ENCODE measurements at regions of chr13 and their contacts with region 1.

Region 1: DNA sequence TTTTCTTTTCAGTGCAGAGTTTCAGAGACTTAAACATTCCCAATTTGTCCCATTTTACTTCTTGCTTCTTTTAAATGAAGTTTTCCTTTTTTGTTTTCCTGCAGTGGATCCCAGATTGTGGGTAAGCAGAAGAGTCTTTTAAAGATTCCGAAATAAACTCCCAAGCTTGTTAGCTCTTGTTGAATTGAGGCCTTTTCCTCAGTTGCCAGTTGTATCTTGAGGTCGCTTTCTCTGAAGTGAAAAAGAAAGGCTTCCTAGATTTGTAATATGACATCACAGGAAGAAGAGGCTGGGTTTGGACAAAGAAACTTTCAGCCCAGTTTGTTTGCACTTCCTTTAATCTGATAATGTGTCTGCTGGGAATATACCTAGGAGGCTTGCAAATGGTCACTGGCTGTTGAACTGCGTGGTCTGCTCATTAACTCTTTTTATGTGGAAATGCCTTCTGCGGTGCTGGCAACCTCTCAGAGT is at the start of gene LPAR6:
- DNase-seq: no peak
- H3K4me3 ChIP-seq: peak within 1 kb of the TSS; percentile 66
- H3K27ac ChIP-seq: peak within 1 kb of the TSS; percentile 86
- H3K4me1 ChIP-seq: peaks cover 11% of the 10 kb centered on the region
- H3K27me3 ChIP-seq: no peaks in the 10 kb centered on the region
- CTCF ChIP-seq: no peak
- total RNA-seq, gene LPAR6: 11.5 TPM

Region 2: DNA sequence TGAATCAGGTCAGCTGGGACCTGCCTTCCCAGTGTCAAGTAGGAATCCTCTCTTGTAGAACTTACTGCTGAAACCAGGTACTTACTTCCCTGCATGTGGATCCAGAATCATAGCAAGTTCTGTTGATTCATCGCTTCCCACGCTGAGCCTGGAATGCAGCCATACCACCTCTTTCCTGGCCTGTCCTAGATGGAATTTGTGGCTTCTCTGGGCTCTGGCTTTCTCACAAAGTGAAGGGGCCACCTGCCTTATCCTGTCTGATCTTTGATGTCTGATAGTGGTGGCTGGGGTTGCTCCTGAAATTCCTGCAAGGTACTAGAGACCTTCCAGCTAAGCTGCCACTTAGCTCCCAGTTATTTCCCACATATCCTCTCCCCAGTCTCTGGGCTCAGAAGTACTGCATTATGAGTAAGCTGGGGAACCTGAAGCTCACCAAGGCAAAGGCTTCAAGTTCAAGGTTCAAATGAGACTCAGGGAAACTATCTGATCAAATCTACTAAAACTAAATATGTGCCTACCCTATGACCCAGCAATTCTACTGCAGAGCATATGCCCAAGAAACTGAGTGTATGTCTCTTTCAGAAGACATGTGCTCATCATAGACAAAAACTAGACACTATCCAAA is 515.4 kb before region 1 on chr13:
- intact Hi-C with region 1: no loop called
- DNase-seq: no peak
- H3K4me3 ChIP-seq: no peak overlapping the region
- H3K27ac ChIP-seq: no peak overlapping the region
- H3K4me1 ChIP-seq: no peaks in the 10 kb centered on the region
- H3K27me3 ChIP-seq: no peaks in the 10 kb centered on the region
- CTCF ChIP-seq: no peak

Region 3: GRCh38 chr13:48233046-48233907 is 179.6 kb before region 1 on chr13 and contains the start of gene ITM2B:
- intact Hi-C with region 1: no loop called
- DNase-seq: peak; percentile 84
- H3K4me3 ChIP-seq: peak within 1 kb of the TSS; percentile 100
- H3K27ac ChIP-seq: peak within 1 kb of the TSS; percentile 100
- H3K4me1 ChIP-seq: peaks cover 70% of the 10 kb centered on the region
- H3K27me3 ChIP-seq: no peaks in the 10 kb centered on the region
- CTCF ChIP-seq: peak; percentile 62
- total RNA-seq, gene ITM2B: 533 TPM

Region 4: GRCh38 chr13:48344264-48344663 is 68.7 kb before region 1 on chr13:
- intact Hi-C with region 1: no loop called
- DNase-seq: no peak
- H3K4me3 ChIP-seq: no peak overlapping the region
- H3K27ac ChIP-seq: no peak overlapping the region
- H3K4me1 ChIP-seq: no peaks in the 10 kb centered on the region
- H3K27me3 ChIP-seq: no peaks in the 10 kb centered on the region
- CTCF ChIP-seq: no peak

Region 5: DNA sequence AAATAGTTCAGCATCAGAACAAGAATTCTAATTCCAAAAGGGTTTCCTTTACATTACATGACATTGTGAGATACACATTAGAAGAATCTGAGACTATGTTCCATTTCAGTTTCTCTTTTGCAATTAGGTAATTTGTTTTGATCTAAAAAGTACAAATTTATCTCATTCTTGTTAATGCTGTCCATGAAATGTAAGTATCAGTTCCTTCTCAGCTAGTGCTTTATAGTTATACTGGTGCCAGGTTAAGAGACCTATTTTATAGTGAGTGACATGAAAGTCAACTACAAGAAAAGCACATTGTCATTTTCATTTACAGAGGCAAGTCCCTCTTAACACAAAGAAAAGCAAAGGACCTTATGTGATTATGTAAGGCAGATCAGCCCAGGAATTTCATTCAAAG is 76.1 kb after region 1 on chr13:
- intact Hi-C with region 1: loop called (anchors 10 kb)
- DNase-seq: no peak
- H3K4me3 ChIP-seq: no peak overlapping the region
- H3K27ac ChIP-seq: peak overlapping the region; percentile 20
- H3K4me1 ChIP-seq: peaks cover 25% of the 10 kb centered on the region
- H3K27me3 ChIP-seq: no peaks in the 10 kb centered on the region
- CTCF ChIP-seq: no peak